Panc1 (cell line): ENCODE measurements at regions of chr2 and their contacts with region 1.

Region 1: GRCh38 chr2:50480507-50480906 is 551.4 kb downstream of the NRXN1 start:
- DNase-seq: no peak
- ATAC-seq: no peak
- H3K4me3 ChIP-seq: no peak overlapping the region
- H3K27ac ChIP-seq: no peak overlapping the region
- H3K4me1 ChIP-seq: no peaks in the 10 kb centered on the region
- H3K27me3 ChIP-seq: no peaks in the 10 kb centered on the region
- CTCF ChIP-seq: no peak

Region 2: DNA sequence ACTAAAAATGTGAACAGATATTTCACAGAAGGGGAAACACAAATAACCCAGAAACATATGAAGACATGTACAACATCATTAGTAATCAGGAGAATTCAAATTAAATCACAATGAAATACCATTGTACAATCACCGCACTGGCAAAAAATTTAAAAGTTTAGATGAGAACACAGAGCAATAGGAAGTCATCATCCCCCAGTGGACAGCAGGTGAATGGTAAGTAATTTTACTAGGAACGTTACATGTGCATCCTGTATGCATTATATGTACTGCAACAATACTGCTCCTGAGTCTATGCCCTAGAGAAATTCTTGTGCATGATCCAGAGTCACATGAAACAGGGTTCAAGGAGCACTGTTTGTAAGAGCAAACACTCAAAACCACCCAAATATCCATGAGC is 162.4 kb before region 1 on chr2:
- CTCF ChIA-PET with region 1: interaction called, 10 read pairs
- POLR2A ChIA-PET with region 1: no interaction called
- in situ Hi-C with region 1: no loop called
- intact Hi-C with region 1: no loop called
- DNase-seq: no peak
- ATAC-seq: no peak
- H3K4me3 ChIP-seq: no peak overlapping the region
- H3K27ac ChIP-seq: no peak overlapping the region
- H3K4me1 ChIP-seq: no peaks in the 10 kb centered on the region
- H3K27me3 ChIP-seq: no peaks in the 10 kb centered on the region; the same call in 1 of the 2 replicates
- CTCF ChIP-seq: no peak; the same call in 1 of the 2 replicates